B cell (primary cell): ENCODE measurements at regions of chr1 and their contacts with region 1.

Region 1: DNA sequence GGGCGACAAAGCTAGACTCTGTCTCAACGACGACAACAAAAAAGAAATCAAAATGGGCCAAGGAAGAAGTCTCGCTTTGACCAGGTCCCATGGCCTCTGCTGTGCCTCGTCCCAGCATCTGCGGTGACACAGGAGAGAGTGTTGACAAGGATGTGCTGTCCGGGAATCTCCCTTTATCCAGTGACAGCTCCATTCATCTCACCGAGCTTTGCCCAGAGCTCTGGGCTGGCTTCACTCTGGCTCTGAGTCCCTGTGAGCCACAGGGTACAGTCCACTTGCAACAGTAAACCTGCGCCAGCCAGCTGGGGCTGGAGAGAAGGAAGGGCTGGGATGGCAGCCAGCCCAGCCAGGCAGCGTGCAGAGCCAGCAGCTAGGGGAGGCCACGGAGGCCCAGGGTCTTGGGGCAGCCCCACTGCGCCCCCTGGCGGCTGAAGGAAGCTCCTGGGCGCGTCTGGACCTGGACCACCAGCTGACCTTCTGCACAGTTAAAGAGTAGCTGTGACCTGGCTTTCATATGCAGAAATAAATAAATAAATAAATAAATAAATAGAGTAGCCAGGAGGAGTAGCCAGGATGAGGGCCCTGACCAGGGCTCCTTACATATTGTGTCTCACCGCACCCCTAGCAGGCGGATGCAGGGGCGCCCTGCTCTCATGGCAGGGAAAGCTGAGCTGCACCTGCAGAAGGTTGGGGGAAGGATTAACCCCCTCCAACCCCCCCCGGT is 29.7 kb downstream of the ENO1 start:
- DNase-seq: peak; percentile 82
- ATAC-seq: peak; percentile 92
- H3K4me3 ChIP-seq: no peak overlapping the region
- H3K4me3 Mint-ChIP-seq: no peak overlapping the region
- H3K27ac ChIP-seq: no peak overlapping the region
- H3K27ac Mint-ChIP-seq: no peak overlapping the region
- H3K4me1 ChIP-seq: peaks cover 2 to 5% of the 10 kb centered on the region in 2 donors
- H3K4me1 Mint-ChIP-seq: peaks cover 2% of the 10 kb centered on the region
- H3K27me3 ChIP-seq: no peaks in the 10 kb centered on the region
- H3K27me3 Mint-ChIP-seq: peaks cover 7% of the 10 kb centered on the region
- CTCF ChIP-seq: peak; percentile 92

Region 2: DNA sequence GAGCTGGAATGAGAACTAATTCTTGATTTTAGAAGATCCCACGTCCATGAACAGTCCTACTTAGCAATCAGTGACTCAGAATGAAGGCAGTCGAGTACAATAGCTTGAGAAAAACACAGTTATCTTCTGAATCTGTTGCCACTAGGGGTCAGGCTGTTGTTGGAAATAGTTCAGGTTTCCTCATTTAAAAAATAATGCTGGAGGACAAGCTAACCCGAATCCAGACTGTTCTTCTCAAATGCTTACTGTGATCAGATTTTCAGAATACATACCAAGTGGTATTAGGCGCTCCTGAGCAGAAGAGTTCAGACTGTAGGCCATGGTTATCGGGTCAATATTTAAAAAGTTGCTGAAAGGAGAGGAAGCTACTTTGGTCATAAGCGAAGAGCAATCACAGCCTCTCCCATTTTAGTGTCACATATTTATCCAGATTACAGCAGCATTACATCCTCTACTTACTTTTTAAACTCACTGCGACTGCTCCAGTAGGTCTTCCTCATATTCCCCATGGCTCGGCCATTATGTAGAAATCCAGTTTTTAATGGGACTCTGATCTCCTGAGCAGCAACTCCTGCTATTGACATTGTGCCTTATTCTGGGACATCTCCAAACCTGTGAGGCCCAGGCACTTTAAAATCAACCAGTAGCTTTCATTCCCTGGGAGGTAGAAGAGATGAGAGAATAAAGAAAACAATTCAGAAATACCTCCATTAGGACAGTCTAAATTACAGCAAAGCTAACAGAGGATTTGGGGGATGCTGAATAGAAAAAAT is 833.6 kb before region 1 on chr1:
- CTCF ChIA-PET with region 1: interaction called, 80 read pairs
- POLR2A ChIA-PET with region 1: no interaction called
- intact Hi-C with region 1: no loop called
- DNase-seq: peak; percentile 68
- ATAC-seq: peak; percentile 57
- H3K4me3 ChIP-seq: no peak overlapping the region
- H3K4me3 Mint-ChIP-seq: no peak overlapping the region
- H3K27ac ChIP-seq: no peak overlapping the region
- H3K27ac Mint-ChIP-seq: no peak overlapping the region
- H3K4me1 ChIP-seq: peaks cover 3 to 8% of the 10 kb centered on the region in 2 donors
- H3K4me1 Mint-ChIP-seq: peaks cover 4% of the 10 kb centered on the region
- H3K27me3 ChIP-seq: peaks cover 0 to 25% (median 11%) of the 10 kb centered on the region in 4 experiments
- H3K27me3 Mint-ChIP-seq: peaks cover 27% of the 10 kb centered on the region
- CTCF ChIP-seq: peak; percentile 80

Region 3: GRCh38 chr1:8409106-8409505 is 439.7 kb before region 1 on chr1:
- CTCF ChIA-PET with region 1: interaction called, 11 read pairs
- POLR2A ChIA-PET with region 1: no interaction called
- intact Hi-C with region 1: no loop called
- DNase-seq: peak; percentile 63
- ATAC-seq: peak; percentile 87
- H3K4me3 ChIP-seq: no peak overlapping the region
- H3K4me3 Mint-ChIP-seq: peak overlapping the region; percentile 11
- H3K27ac ChIP-seq: peak overlapping the region; percentile 6 to 51
- H3K27ac Mint-ChIP-seq: peak overlapping the region; percentile 27
- H3K4me1 ChIP-seq: peaks cover 11 to 21% of the 10 kb centered on the region in 2 donors
- H3K4me1 Mint-ChIP-seq: peaks cover 38% of the 10 kb centered on the region
- H3K27me3 ChIP-seq: no peaks in the 10 kb centered on the region
- H3K27me3 Mint-ChIP-seq: no peaks in the 10 kb centered on the region
- CTCF ChIP-seq: peak; percentile 71

Region 4: GRCh38 chr1:8560611-8561544 is 287.9 kb before region 1 on chr1:
- CTCF ChIA-PET with region 1: interaction called, 99 read pairs
- POLR2A ChIA-PET with region 1: no interaction called
- intact Hi-C with region 1: no loop called
- DNase-seq: peak; percentile 73
- ATAC-seq: peak; percentile 88
- H3K4me3 ChIP-seq: no peak overlapping the region
- H3K4me3 Mint-ChIP-seq: no peak overlapping the region
- H3K27ac ChIP-seq: peak overlapping the region in 1 of 2 donors; percentile 52
- H3K27ac Mint-ChIP-seq: peak overlapping the region; percentile 53
- H3K4me1 ChIP-seq: peaks cover 25 to 37% of the 10 kb centered on the region in 2 donors
- H3K4me1 Mint-ChIP-seq: peaks cover 44% of the 10 kb centered on the region
- H3K27me3 ChIP-seq: no peaks in the 10 kb centered on the region
- H3K27me3 Mint-ChIP-seq: no peaks in the 10 kb centered on the region
- CTCF ChIP-seq: peak; percentile 98

Region 5: DNA sequence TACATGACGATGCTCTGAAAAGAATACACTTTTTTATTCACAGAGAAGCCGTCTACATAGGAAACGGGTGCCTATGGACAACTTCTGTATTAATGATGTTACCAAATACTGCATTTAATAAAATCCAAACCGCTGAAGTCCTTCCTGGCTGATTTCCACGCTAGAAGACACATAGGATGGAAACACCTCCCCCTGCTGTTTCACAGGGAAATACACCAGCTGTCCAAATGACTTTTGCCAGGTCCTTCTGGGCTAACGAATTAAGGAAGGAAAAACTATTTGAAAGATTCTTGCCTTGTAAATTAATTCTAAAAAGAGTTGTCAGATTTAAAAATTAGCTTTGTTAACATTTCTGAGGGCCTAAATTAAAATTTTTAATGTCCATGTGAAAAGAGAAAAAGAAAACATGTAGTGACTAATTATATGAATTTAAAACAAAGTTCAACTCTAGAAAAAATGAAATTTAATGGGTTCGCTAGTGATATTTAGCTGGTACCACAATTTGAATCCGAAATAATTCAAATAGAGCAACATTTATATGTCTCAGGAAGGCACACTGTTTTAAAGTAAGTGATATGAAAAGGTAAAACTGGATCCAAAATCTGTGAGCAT is 177.4 kb before region 1 on chr1:
- CTCF ChIA-PET with region 1: interaction called, 41 read pairs
- POLR2A ChIA-PET with region 1: no interaction called
- intact Hi-C with region 1: no loop called
- DNase-seq: peak; percentile 73
- ATAC-seq: no peak
- H3K4me3 ChIP-seq: no peak overlapping the region
- H3K4me3 Mint-ChIP-seq: no peak overlapping the region
- H3K27ac ChIP-seq: no peak overlapping the region
- H3K27ac Mint-ChIP-seq: no peak overlapping the region
- H3K4me1 ChIP-seq: peaks cover 48 to 59% of the 10 kb centered on the region in 2 donors
- H3K4me1 Mint-ChIP-seq: peaks cover 66% of the 10 kb centered on the region
- H3K27me3 ChIP-seq: no peaks in the 10 kb centered on the region
- H3K27me3 Mint-ChIP-seq: no peaks in the 10 kb centered on the region
- CTCF ChIP-seq: peak; percentile 92

Region 6: GRCh38 chr1:8727809-8728213 is 121.0 kb before region 1 on chr1:
- CTCF ChIA-PET with region 1: interaction called, 106 read pairs
- POLR2A ChIA-PET with region 1: no interaction called
- intact Hi-C with region 1: loop called (anchors 1 kb)
- DNase-seq: no peak
- ATAC-seq: no peak
- H3K4me3 ChIP-seq: no peak overlapping the region
- H3K4me3 Mint-ChIP-seq: no peak overlapping the region
- H3K27ac ChIP-seq: no peak overlapping the region
- H3K27ac Mint-ChIP-seq: no peak overlapping the region
- H3K4me1 ChIP-seq: peaks cover 10 to 13% of the 10 kb centered on the region in 2 donors
- H3K4me1 Mint-ChIP-seq: peaks cover 24% of the 10 kb centered on the region
- H3K27me3 ChIP-seq: no peaks in the 10 kb centered on the region
- H3K27me3 Mint-ChIP-seq: no peaks in the 10 kb centered on the region
- CTCF ChIP-seq: no peak

Region 7: DNA sequence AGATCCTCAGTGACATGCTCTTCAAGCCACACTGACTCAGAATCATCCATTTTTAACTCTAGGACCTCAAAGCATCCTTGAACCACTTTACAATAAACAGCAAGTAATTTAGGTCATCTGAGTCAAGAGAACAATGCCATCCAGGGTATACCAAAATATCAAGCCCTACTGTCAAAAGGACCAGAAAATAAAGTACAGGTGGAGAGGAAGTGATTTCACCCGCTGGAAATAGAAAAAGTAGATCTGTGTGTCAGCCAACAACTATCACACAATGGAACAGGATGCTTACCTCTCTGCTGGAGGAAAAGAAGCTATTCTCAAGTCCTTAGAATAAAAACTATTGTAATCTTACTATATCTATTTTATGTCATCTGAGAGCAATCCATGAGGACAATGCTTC is 68.4 kb before region 1 on chr1:
- CTCF ChIA-PET with region 1: no interaction called
- POLR2A ChIA-PET with region 1: no interaction called
- intact Hi-C with region 1: no loop called
- DNase-seq: no peak
- ATAC-seq: no peak
- H3K4me3 ChIP-seq: no peak overlapping the region
- H3K4me3 Mint-ChIP-seq: no peak overlapping the region
- H3K27ac ChIP-seq: no peak overlapping the region
- H3K27ac Mint-ChIP-seq: no peak overlapping the region
- H3K4me1 ChIP-seq: peaks cover 3 to 13% of the 10 kb centered on the region in 2 donors
- H3K4me1 Mint-ChIP-seq: peaks cover 28% of the 10 kb centered on the region
- H3K27me3 ChIP-seq: no peaks in the 10 kb centered on the region
- H3K27me3 Mint-ChIP-seq: no peaks in the 10 kb centered on the region
- CTCF ChIP-seq: no peak

Region 8: GRCh38 chr1:8858888-8859706 is 10.3 kb after region 1 on chr1:
- CTCF ChIA-PET with region 1: interaction called, 119 read pairs
- POLR2A ChIA-PET with region 1: no interaction called
- intact Hi-C with region 1: no loop called
- DNase-seq: peak; percentile 73
- ATAC-seq: peak; percentile 83
- H3K4me3 ChIP-seq: no peak overlapping the region
- H3K4me3 Mint-ChIP-seq: no peak overlapping the region
- H3K27ac ChIP-seq: no peak overlapping the region
- H3K27ac Mint-ChIP-seq: peak overlapping the region; percentile 18
- H3K4me1 ChIP-seq: peaks cover 7 to 8% of the 10 kb centered on the region in 2 donors
- H3K4me1 Mint-ChIP-seq: peaks cover 18% of the 10 kb centered on the region
- H3K27me3 ChIP-seq: no peaks in the 10 kb centered on the region
- H3K27me3 Mint-ChIP-seq: no peaks in the 10 kb centered on the region
- CTCF ChIP-seq: peak; percentile 77

Region 9: DNA sequence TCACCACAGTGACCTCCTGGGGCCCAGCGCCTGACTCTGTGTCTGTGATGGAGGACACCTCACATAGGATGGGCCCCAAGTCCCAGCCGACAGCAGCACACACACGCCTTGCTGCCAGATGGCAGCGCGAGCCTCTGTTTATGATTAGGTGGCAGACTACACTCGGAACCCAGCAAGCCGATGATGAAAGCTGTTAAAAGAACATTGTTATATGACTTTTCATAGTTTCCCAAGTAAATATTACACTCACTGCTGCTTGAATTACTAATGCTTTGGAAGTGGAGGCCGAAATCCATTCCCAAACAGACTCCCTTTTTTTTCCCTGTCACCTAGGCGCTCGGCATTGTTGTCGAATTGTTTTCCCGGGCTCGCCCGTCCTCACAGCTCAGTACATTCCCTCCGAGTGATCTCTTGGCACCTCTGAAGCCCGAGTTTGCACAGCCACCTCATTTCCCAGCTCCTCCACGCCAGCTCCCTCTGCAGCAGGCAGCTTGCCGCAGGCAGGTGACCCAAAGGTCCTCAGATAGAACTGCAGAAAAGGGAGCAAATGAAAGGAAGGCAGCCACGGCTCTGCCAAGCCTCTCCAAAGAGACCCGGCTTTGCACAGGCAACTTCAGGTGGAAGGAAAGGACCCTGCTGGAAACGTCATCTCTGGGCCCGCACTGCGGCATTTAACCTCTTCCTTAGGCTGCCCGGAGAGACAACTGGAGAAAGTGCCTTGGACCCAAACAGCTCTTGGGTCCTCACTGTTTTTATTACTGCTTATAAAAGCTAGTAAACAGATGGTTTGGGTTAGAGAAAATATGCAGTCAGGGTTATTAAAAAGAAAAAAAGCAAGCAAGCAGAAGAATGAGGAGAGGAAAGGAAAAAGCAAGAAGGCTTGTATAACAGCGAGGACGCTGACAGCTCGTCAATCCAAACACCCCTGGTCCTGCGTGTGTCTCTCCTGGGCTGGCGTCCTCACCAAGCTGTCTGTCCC is 618.2 kb after region 1 on chr1:
- CTCF ChIA-PET with region 1: no interaction called
- POLR2A ChIA-PET with region 1: no interaction called
- intact Hi-C with region 1: no loop called
- DNase-seq: no peak
- ATAC-seq: no peak
- H3K4me3 ChIP-seq: no peak overlapping the region
- H3K4me3 Mint-ChIP-seq: no peak overlapping the region
- H3K27ac ChIP-seq: no peak overlapping the region
- H3K27ac Mint-ChIP-seq: no peak overlapping the region
- H3K4me1 ChIP-seq: no peaks in the 10 kb centered on the region
- H3K4me1 Mint-ChIP-seq: no peaks in the 10 kb centered on the region
- H3K27me3 ChIP-seq: peaks cover 0 to 8% (median 2%) of the 10 kb centered on the region in 4 experiments
- H3K27me3 Mint-ChIP-seq: peaks cover 30% of the 10 kb centered on the region
- CTCF ChIP-seq: no peak